Activated CD8-positive, alpha-beta T cell treated with anti-CD3 and anti-CD28 coated beads for 36 hours (primary cell): ENCODE measurements at regions of chr5 and their contacts with region 1.

Region 1: GRCh38 chr5:170327168-170327567 is 29.6 kb upstream of the LCP2 start:
- DNase-seq: no peak
- ATAC-seq: no peak
- H3K4me3 Mint-ChIP-seq: no peak overlapping the region
- H3K27ac Mint-ChIP-seq: no peak overlapping the region
- H3K4me1 Mint-ChIP-seq: peaks cover 2% of the 10 kb centered on the region
- H3K27me3 Mint-ChIP-seq: no peaks in the 10 kb centered on the region
- CTCF ChIP-seq: no peak

Region 2: GRCh38 chr5:170312666-170313065 is 14.5 kb before region 1 on chr5:
- CTCF ChIA-PET with region 1: interaction called, 204 read pairs
- POLR2A ChIA-PET with region 1: interaction called, 86 read pairs
- intact Hi-C with region 1: loop called (anchors 1 kb)
- DNase-seq: peak; percentile 82
- ATAC-seq: peak; percentile 91
- H3K4me3 Mint-ChIP-seq: peak overlapping the region; percentile 75
- H3K27ac Mint-ChIP-seq: peak overlapping the region; percentile 87
- H3K4me1 Mint-ChIP-seq: peaks cover 66% of the 10 kb centered on the region
- H3K27me3 Mint-ChIP-seq: no peaks in the 10 kb centered on the region
- CTCF ChIP-seq: no peak